ENCODE measurements at regions of chr20 and their contacts with region 1.

Region 1: GRCh38 chr20:58087193-58087858 is 141.1 kb downstream of the ANKRD60 start:
- DNase-seq: peak in 2 of 5 donors; percentile 38 to 47
- ATAC-seq: peak in 2 of 4 donors; percentile 26 to 72
- H3K4me3 ChIP-seq: no peak overlapping the region
- H3K27ac ChIP-seq: no peak overlapping the region
- H3K4me1 ChIP-seq: no peaks in the 10 kb centered on the region
- H3K27me3 ChIP-seq: peaks cover 0 to 7% (median 0%) of the 10 kb centered on the region in 9 donors
- CTCF ChIP-seq: peak; percentile 81 to 96 (median 88)
- POLR2A ChIP-seq: no peak

Region 2: GRCh38 chr20:57991211-57991881 is 96.0 kb before region 1 on chr20:
- intact Hi-C with region 1: loop called in 1 of 10 experiments (anchors 10 kb)
- DNase-seq: peak in 1 of 5 donors; percentile 46
- ATAC-seq: peak in 2 of 4 donors; percentile 52 to 61
- H3K4me3 ChIP-seq: no peak overlapping the region
- H3K27ac ChIP-seq: peak overlapping the region in 1 of 12 donors; percentile 26
- H3K4me1 ChIP-seq: peaks cover 0 to 26% (median 6%) of the 10 kb centered on the region in 12 donors
- H3K27me3 ChIP-seq: no peaks in the 10 kb centered on the region
- CTCF ChIP-seq: no peak
- POLR2A ChIP-seq: no peak